Activated naive CD4-positive, alpha-beta T cell treated with anti-CD3 and anti-CD28 coated beads for 36 hours (primary cell): ENCODE measurements at regions of chr17 and their contacts with region 1.

Region 1: GRCh38 chr17:67376737-67377487 is at the start of gene PITPNC1:
- DNase-seq: peak; percentile 90
- H3K4me3 Mint-ChIP-seq: peak within 1 kb of the TSS; percentile 88
- H3K27ac Mint-ChIP-seq: peak within 1 kb of the TSS; percentile 82
- H3K4me1 Mint-ChIP-seq: peaks cover 38% of the 10 kb centered on the region
- H3K27me3 Mint-ChIP-seq: no peaks in the 10 kb centered on the region
- total RNA-seq, gene PITPNC1: 58.7 to 60.0 TPM

Region 2: DNA sequence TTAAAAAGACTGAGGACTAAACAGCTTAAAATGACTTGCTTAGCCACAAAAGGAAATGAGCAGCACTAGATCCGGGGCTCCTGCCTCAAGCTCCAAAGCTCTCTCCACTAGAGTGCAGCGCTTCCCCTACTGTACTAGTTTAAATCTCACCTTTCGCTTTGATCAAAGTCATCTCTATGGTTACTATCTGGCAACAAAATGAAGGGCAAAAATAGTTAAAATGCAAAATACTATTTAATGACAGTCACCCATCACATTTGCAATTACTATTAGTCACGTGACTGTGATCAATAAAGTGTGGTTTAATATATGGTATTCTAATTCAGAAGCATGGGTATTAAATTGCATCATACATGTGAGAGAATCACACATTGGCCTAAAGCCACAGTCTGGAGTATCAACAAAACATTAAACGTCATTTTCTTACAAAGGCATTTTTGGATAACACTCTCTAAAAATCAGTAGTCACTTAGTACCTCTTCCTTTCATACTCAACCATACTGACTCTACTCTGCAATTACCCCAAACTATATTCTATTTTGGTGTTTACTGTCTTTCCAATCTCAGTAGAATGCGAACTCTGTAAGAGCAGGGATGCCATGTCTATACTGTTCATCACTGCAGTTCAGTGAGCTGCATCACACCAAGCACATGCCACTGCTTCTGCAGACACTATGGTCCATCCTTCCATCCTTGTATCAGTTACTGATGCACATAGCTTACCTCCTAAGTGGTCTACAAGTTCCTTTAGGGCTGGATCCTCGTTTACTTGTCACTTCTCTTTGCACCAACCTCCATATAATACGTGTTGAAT is 16.7 kb before region 1 on chr17:
- CTCF ChIA-PET with region 1: interaction called, 52 read pairs
- intact Hi-C with region 1: no loop called
- DNase-seq: peak; percentile 78
- H3K4me3 Mint-ChIP-seq: peak overlapping the region; percentile 10
- H3K27ac Mint-ChIP-seq: peak overlapping the region; percentile 65
- H3K4me1 Mint-ChIP-seq: peaks cover 70% of the 10 kb centered on the region
- H3K27me3 Mint-ChIP-seq: no peaks in the 10 kb centered on the region

Region 3: DNA sequence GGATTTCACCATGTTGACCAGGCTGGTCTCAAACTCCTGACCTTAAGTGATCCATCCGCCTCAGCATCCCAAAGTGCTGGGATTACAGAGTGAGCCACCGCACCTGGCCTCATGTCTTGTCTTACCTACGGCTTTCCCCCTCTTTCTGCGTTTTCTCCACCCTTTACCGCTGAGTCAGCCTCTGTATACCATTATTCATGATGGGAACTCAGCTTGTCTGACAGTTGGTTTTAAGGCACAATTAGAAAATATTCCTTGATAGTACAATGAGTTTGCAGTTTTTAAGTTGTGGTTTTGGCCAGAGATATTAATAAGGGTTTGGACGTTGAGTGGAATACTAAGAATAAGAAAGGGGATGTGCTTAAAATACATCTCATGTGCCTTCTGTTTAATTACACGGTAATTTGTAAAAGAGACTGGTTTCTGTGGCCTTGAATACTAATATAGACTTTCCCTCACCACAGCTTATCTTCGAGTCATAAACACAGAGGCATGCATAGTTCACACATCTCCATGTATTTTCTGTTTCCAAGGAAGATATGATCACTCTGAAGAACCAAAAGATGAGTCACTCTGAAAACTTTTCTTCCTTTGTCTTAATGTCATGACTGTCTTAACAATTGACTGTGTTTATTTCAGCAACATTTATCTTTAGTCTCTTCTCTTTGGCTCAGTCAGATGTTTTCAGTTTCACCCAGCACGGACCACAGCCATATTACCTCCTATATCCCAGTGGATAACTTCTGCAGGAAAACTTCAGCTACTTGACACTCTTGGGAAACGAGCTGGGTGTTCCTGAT is 54.5 kb after region 1 on chr17:
- CTCF ChIA-PET with region 1: interaction called, 18 read pairs
- intact Hi-C with region 1: no loop called
- DNase-seq: peak; percentile 46
- H3K4me3 Mint-ChIP-seq: peak overlapping the region; percentile 25
- H3K27ac Mint-ChIP-seq: peak overlapping the region; percentile 95
- H3K4me1 Mint-ChIP-seq: peaks cover 76% of the 10 kb centered on the region
- H3K27me3 Mint-ChIP-seq: no peaks in the 10 kb centered on the region

Region 4: GRCh38 chr17:67475236-67475937 is 98.5 kb after region 1 on chr17:
- CTCF ChIA-PET with region 1: interaction called, 245 read pairs
- intact Hi-C with region 1: loop called (anchors 1 kb)
- DNase-seq: peak; percentile 95
- H3K4me3 Mint-ChIP-seq: peak overlapping the region; percentile 60
- H3K27ac Mint-ChIP-seq: peak overlapping the region; percentile 99
- H3K4me1 Mint-ChIP-seq: peaks cover 60% of the 10 kb centered on the region
- H3K27me3 Mint-ChIP-seq: no peaks in the 10 kb centered on the region

Region 5: GRCh38 chr17:67619555-67619954 is 242.6 kb after region 1 on chr17:
- CTCF ChIA-PET with region 1: no interaction called
- intact Hi-C with region 1: no loop called
- DNase-seq: no peak
- H3K4me3 Mint-ChIP-seq: no peak overlapping the region
- H3K27ac Mint-ChIP-seq: no peak overlapping the region
- H3K4me1 Mint-ChIP-seq: peaks cover 3% of the 10 kb centered on the region
- H3K27me3 Mint-ChIP-seq: no peaks in the 10 kb centered on the region

Region 6: GRCh38 chr17:67629971-67630320 is 253.0 kb after region 1 on chr17:
- CTCF ChIA-PET with region 1: interaction called, 22 read pairs
- intact Hi-C with region 1: loop called (anchors 1 kb)
- DNase-seq: peak; percentile 13
- H3K4me3 Mint-ChIP-seq: no peak overlapping the region
- H3K27ac Mint-ChIP-seq: no peak overlapping the region
- H3K4me1 Mint-ChIP-seq: no peaks in the 10 kb centered on the region
- H3K27me3 Mint-ChIP-seq: no peaks in the 10 kb centered on the region

Region 7: GRCh38 chr17:67779098-67779672 is 402.3 kb after region 1 on chr17:
- CTCF ChIA-PET with region 1: no interaction called
- intact Hi-C with region 1: loop called (anchors 1 kb)
- DNase-seq: peak; percentile 43
- H3K4me3 Mint-ChIP-seq: no peak overlapping the region
- H3K27ac Mint-ChIP-seq: no peak overlapping the region
- H3K4me1 Mint-ChIP-seq: no peaks in the 10 kb centered on the region
- H3K27me3 Mint-ChIP-seq: no peaks in the 10 kb centered on the region